MCF 10A (cell line): ENCODE measurements at regions of chr14 and their contacts with region 1.

Region 1: GRCh38 chr14:56555921-56556570 is 23.6 kb upstream of the TMEM260 start:
- DNase-seq: peak; percentile 50
- H3K4me3 Mint-ChIP-seq: no peak overlapping the region
- H3K27ac Mint-ChIP-seq: no peak overlapping the region
- H3K4me1 Mint-ChIP-seq: no peaks in the 10 kb centered on the region
- H3K27me3 Mint-ChIP-seq: no peaks in the 10 kb centered on the region
- CTCF ChIP-seq: peak; percentile 72

Region 2: GRCh38 chr14:56659964-56660551 is 104.0 kb after region 1 on chr14:
- CTCF ChIA-PET with region 1: interaction called, 4 read pairs
- POLR2A ChIA-PET with region 1: no interaction called
- intact Hi-C with region 1: loop called (anchors 5 kb)
- DNase-seq: peak; percentile 51
- H3K4me3 Mint-ChIP-seq: no peak overlapping the region
- H3K27ac Mint-ChIP-seq: no peak overlapping the region
- H3K4me1 Mint-ChIP-seq: no peaks in the 10 kb centered on the region
- H3K27me3 Mint-ChIP-seq: no peaks in the 10 kb centered on the region
- CTCF ChIP-seq: peak; percentile 55

Region 3: DNA sequence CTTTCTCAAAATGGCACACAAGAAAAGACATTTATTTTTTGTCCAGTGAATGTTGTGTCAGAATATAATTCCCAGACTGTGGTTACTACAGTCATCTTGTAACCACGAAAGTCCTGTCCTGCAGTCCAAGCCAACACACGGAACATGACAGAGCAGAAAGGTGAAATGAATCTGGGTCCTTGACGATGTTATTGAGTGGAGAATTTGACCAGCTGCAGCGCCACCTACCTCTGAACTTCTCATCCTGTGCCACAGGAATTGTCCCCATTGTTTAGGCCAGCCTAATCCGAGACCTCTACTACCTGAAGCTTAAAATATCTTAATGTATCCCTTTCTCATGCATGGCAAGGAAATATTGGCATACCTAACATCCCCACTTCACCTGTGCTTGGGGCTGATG is 318.3 kb after region 1 on chr14:
- CTCF ChIA-PET with region 1: no interaction called
- POLR2A ChIA-PET with region 1: no interaction called
- intact Hi-C with region 1: loop called (anchors 2 kb)
- DNase-seq: peak; percentile 43
- H3K4me3 Mint-ChIP-seq: no peak overlapping the region
- H3K27ac Mint-ChIP-seq: no peak overlapping the region
- H3K4me1 Mint-ChIP-seq: no peaks in the 10 kb centered on the region
- H3K27me3 Mint-ChIP-seq: peaks cover 60% of the 10 kb centered on the region
- CTCF ChIP-seq: peak; percentile 40

Region 4: DNA sequence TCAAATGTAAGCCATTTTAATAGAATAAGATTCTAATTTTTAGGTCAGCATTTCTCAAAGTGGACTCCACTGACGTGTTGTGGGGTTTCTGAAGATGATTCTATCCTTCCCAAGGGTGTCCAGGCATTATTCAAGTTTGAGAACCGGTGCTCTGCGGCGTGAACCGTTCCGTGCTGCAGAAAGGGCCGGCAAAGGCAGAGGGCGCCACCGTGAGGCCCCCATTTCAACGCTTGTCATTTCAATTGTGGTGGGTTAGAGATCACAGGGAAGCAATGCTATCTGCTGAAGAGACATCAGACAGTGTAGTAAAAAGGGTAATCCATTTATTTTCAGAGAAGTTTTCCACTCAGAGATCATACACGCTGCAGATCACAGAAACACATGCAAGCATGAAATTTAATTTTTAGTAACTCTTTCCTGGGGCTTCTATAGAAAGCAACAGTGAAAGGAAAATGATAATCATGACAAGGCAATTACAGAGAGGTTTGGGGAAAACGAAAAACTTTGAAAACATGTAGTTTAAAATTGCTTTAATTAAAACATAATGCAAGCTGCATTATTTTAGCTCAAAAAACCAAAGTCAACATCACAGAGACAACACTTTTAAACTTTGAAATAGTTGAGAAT is 511.0 kb after region 1 on chr14:
- CTCF ChIA-PET with region 1: no interaction called
- POLR2A ChIA-PET with region 1: no interaction called
- intact Hi-C with region 1: loop called (anchors 10 kb)
- DNase-seq: peak; percentile 8
- H3K4me3 Mint-ChIP-seq: no peak overlapping the region
- H3K27ac Mint-ChIP-seq: no peak overlapping the region
- H3K4me1 Mint-ChIP-seq: no peaks in the 10 kb centered on the region
- H3K27me3 Mint-ChIP-seq: peaks cover 85% of the 10 kb centered on the region
- CTCF ChIP-seq: no peak

Region 5: DNA sequence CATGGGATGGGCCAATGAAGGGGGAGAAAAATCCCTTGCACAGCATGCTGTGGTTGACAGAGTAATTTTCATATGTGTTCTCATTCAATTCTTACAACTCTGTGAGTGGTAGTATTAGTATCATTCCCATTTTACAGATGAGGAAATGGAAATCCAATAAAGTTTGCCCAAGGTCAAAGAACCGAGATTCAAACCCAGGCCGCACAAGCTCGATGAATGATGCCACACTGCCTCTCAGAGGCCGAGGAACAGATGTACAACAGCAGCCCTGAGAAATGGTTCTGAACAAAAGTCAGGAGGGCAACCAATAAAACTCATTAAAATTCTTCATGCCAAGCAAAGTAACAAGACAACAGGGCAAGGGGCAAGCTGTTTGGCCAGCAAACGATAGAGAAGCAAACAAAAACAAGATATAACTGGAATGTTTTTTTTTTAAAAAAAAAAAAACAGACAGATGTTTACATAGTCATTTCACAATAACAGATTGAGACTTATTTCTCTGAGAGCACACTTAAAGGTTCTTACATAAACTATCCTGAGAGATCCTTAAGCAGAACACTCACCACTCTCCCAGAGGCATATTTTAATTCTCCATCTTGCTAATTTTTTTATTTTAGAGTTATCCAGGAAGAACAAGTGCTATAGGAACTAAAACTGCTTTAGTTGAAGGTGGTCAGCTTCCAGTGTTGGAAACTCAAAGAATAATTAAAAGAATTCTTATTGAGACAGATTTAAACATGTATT is 626.9 kb after region 1 on chr14:
- CTCF ChIA-PET with region 1: interaction called, 8 read pairs
- POLR2A ChIA-PET with region 1: no interaction called
- intact Hi-C with region 1: loop called (anchors 5 kb)
- DNase-seq: peak; percentile 45
- H3K4me3 Mint-ChIP-seq: no peak overlapping the region
- H3K27ac Mint-ChIP-seq: no peak overlapping the region
- H3K4me1 Mint-ChIP-seq: no peaks in the 10 kb centered on the region
- H3K27me3 Mint-ChIP-seq: peaks cover 66% of the 10 kb centered on the region
- CTCF ChIP-seq: peak; percentile 44

Region 6: GRCh38 chr14:57199921-57200320 is 643.9 kb after region 1 on chr14:
- CTCF ChIA-PET with region 1: interaction called, 4 read pairs
- POLR2A ChIA-PET with region 1: no interaction called
- intact Hi-C with region 1: loop called (anchors 1 kb)
- DNase-seq: peak; percentile 35
- H3K4me3 Mint-ChIP-seq: no peak overlapping the region
- H3K27ac Mint-ChIP-seq: no peak overlapping the region
- H3K4me1 Mint-ChIP-seq: peaks cover 9% of the 10 kb centered on the region
- H3K27me3 Mint-ChIP-seq: no peaks in the 10 kb centered on the region
- CTCF ChIP-seq: no peak

Region 7: DNA sequence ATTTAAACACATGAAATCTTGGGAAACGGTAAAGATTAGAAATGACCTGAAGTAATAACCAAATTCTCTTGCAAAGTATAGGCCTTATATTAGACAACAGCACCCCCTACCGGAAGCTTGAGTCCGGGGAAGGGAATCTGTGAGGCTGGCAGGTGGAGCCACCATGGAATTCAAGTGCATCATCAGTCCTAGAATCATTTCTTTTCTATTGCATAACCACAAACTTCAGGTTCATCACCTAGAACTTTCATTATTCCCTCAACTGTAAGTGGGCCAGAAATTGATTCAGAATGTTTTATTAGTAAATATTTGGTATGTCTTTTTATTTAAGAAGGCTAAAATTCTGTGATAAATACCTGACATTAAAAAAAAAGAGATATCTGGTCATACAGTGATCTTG is 761.3 kb after region 1 on chr14:
- CTCF ChIA-PET with region 1: interaction called, 4 read pairs
- POLR2A ChIA-PET with region 1: no interaction called
- intact Hi-C with region 1: loop called (anchors 1 kb)
- DNase-seq: peak; percentile 90
- H3K4me3 Mint-ChIP-seq: no peak overlapping the region
- H3K27ac Mint-ChIP-seq: no peak overlapping the region
- H3K4me1 Mint-ChIP-seq: no peaks in the 10 kb centered on the region
- H3K27me3 Mint-ChIP-seq: no peaks in the 10 kb centered on the region
- CTCF ChIP-seq: peak; percentile 91